A549 (cell line): ENCODE measurements at regions of chr11 and their contacts with region 1.

Region 1: DNA sequence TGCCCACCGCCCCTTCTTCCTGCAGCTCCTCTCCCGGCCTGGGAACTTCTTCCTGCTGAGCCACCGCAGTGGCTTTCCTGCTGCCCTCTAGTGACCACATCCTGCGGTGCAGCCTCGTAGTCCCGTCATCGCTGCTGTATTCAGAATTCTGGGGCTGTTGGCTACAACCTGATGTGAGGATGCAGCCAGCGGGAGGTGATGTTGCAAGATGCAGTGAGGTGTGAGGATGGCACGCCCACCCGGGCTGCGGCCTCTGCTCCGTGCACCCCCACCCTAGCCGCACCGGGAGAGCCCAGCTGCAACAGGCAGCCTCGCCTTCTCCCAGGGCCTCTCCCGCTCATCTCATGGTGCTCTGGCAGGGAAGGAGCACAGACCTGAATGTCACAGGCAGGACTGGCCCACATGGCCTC is 10.1 kb downstream of the CHST1 start:
- DNase-seq: peak; percentile 61 to 88
- ATAC-seq: peak; percentile 83 to 93
- H3K4me3 ChIP-seq: no peak overlapping the region
- H3K27ac ChIP-seq: no peak overlapping the region
- H3K4me1 ChIP-seq: no peaks in the 10 kb centered on the region
- CTCF ChIP-seq: peak; percentile 75
- EP300 ChIP-seq: no peak
- POLR2A ChIP-seq: no peak
- RAD21 ChIP-seq: peak; percentile 64 to 67

Region 2: DNA sequence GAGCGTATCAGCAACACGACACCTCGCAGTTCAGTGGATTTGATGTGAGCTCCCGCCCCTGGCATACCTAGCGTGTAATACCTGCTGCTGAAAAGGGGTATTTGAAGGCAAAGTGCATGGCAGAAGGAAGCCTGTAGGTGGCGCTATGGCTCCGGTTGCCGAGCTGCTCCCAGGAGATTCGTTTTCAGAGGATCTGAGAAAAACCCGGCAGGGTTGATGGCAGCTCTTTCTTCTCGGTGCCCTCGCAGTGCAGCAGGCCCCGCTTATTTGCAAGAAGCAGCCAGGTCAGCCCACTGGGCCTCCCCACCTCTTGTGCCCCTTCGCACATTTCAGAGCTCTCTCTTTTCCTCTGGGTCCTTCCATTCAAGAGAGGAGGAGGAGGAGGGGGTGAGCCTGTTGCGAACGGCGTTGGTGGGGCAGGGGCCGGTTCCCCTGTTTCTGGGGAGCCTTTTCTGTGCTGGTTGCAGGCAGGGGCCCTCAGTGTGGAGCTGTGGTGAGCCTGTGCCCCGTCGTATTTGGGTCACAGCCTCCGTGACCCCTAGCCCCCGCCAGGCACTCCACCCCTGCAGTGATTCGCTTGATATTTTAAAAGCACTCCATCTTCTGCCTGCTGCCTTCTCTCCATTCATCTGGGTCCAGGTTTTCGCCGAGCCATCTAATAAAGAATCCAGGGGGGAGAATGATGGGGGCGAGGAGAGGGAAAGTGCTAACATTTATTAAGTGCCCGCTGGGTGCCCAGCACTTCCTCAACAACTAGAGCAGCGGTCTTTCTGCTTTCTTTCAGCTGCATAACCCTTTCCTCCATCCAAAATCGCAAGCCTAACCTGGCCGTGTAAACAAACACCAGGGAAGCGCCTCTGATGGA is 283.9 kb before region 1 on chr11:
- CTCF ChIA-PET with region 1: interaction called, 149 read pairs
- POLR2A ChIA-PET with region 1: no interaction called
- DNase-seq: peak; percentile 68 to 84
- ATAC-seq: peak; percentile 60 to 92
- H3K4me3 ChIP-seq: no peak overlapping the region
- H3K27ac ChIP-seq: no peak overlapping the region
- H3K4me1 ChIP-seq: no peaks in the 10 kb centered on the region
- CTCF ChIP-seq: peak; percentile 82
- EP300 ChIP-seq: no peak
- POLR2A ChIP-seq: no peak
- RAD21 ChIP-seq: peak; percentile 77 to 91

Region 3: DNA sequence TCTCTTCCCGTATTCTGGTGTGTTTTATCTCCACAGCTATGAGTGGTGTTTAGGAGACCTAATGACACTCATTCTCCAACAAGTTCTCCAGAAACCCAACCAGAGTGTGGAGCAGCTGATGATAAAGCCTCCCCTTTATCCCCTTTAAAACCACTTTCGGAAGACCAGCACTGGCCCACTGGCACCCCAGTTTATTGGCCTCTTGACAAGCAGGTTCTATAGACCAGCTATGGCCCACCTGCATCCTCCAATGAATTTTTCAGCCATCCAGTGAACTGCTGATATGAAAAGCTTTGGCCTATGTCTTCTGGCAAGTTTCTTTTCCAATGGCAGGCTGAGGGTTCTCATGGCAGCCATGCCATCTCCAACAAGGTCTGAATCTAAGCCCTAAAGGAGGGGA is 17.3 kb before region 1 on chr11:
- CTCF ChIA-PET with region 1: interaction called, 75 read pairs
- POLR2A ChIA-PET with region 1: no interaction called
- DNase-seq: no peak
- ATAC-seq: no peak
- H3K4me3 ChIP-seq: no peak overlapping the region
- H3K27ac ChIP-seq: no peak overlapping the region
- H3K4me1 ChIP-seq: no peaks in the 10 kb centered on the region
- CTCF ChIP-seq: no peak
- EP300 ChIP-seq: no peak
- POLR2A ChIP-seq: no peak
- RAD21 ChIP-seq: no peak

Region 4: DNA sequence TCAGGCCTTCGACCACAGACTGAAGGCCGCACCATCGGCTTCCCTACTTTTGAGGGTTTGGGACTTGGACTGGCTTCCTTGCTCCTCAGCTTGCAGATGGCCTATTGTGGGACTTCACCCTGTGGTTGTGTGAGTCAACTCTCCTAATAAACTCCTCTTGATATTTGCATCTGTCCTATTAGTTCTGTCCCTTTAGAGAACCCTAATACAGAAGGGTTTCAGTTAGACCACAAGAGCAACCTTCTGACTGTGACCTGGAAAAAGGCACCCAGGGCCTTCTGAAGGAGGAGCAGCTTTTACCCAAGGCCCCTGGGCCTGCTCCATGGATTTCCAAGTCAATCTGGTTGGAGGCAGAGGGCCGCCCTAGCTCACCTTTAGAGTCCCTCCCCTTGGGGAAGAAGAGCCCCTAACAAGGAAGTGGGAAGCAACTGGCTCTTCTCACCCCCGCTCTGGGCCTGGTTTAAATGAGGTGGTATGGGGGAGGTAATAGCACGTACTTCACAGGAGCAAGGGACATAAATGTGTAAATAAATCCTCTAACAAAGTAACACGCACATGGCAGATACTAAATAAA is 21.3 kb after region 1 on chr11:
- CTCF ChIA-PET with region 1: interaction called, 24 read pairs
- POLR2A ChIA-PET with region 1: no interaction called
- DNase-seq: no peak
- ATAC-seq: no peak
- H3K4me3 ChIP-seq: no peak overlapping the region
- H3K27ac ChIP-seq: no peak overlapping the region
- H3K4me1 ChIP-seq: no peaks in the 10 kb centered on the region
- CTCF ChIP-seq: no peak
- EP300 ChIP-seq: no peak
- POLR2A ChIP-seq: no peak
- RAD21 ChIP-seq: no peak

Region 5: DNA sequence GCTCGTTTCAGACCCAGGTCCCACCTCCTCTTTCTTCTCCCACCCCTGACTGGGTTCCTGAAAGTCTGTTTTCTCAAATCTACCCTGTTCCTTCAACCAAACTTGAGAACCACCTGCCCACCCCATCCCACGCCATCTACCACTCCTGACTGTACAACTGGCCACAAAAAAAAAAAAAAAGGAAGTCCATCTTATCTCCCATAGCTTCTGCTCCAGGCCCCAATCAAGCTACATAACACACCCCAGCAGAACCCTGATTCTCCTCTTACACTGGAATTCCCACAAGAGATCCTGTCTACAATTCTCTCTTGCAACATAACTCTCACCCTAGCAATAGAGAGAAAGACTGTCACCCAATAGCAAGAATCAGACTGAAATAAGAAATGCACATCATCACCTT is 49.3 kb after region 1 on chr11:
- CTCF ChIA-PET with region 1: interaction called, 13 read pairs
- POLR2A ChIA-PET with region 1: no interaction called
- DNase-seq: no peak
- ATAC-seq: no peak
- H3K4me3 ChIP-seq: no peak overlapping the region
- H3K27ac ChIP-seq: no peak overlapping the region
- H3K4me1 ChIP-seq: no peaks in the 10 kb centered on the region
- CTCF ChIP-seq: no peak
- EP300 ChIP-seq: no peak
- POLR2A ChIP-seq: no peak
- RAD21 ChIP-seq: no peak

Region 6: DNA sequence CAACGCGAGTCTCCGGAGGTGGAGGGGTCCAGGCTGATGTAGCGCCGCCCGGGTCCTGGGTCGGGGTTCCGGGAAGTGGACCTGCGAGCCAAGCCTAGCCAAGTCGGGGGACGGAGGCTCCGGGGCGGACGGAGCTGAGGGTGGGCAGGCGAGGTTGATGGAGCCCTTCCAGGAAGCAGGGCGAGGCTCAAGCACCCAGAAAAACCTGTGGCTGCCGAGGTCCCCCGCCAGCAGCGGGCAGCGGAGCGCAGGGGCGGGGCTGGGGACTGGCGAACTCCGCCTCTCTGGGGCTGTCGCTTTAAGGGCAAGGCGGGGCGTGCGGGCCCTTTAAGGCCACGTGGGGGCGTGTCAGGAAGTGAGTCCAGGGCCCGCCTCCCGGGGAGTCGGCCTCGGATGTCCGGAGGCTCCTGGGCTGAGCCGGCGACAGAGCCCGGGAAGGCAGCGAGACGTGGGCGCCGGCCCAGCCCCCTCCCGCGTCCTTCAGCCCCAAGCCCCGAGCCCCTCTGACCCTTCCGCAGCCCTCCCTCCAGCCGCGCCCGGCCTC is 149.5 kb after region 1 on chr11 and contains the start of gene SLC35C1:
- CTCF ChIA-PET with region 1: no interaction called
- POLR2A ChIA-PET with region 1: no interaction called
- DNase-seq: peak; percentile 87 to 94
- ATAC-seq: peak; percentile 90 to 95
- H3K4me3 ChIP-seq: peak within 1 kb of the TSS; percentile 68
- H3K27ac ChIP-seq: peak within 1 kb of the TSS; percentile 89 to 92
- H3K4me1 ChIP-seq: peaks cover 23% of the 10 kb centered on the region
- CTCF ChIP-seq: no peak
- EP300 ChIP-seq: no peak
- POLR2A ChIP-seq: peak; percentile 68
- RAD21 ChIP-seq: no peak
- polyA plus RNA-seq, gene SLC35C1: 3.3 and 7.8 TPM in 2 replicates

Region 7: DNA sequence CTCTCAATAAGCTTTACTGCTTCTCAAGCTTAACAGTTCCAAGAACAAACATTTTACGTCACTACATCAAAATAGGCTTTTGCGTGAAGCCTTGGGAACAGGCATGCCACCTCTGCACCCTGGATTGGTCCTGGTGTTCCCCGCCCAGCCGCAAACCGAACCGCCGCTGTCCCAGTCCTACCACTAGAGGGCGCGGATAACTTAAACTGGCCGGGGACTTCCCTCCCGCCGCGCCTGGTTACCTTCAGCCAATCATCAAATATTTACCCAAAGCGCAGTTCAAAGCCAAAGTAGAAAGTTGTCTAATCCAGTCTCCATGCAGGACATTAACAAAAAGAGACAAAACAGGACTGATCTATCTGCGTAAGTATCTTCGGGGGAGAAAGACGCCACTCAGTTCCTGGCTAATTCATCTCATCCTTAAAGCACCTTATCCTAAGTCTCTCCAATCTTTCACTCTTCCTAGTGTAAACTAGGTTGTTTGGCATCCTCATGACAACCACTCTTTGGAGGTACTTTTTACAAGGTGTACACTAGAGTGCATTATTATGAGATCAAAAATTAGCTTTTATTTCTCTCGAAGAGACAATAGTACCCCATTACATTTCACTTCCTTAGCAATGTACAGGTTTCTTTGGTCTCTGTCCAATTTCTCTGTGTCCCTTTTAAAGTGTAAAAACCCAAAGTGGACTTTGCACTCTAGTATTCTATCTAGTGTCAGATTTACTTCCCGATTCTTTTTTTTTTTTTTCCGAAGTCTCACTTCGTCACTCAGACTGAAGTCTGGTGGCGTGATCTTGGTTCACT is 188.0 kb after region 1 on chr11:
- CTCF ChIA-PET with region 1: no interaction called
- POLR2A ChIA-PET with region 1: no interaction called
- DNase-seq: peak; percentile 88 to 91
- ATAC-seq: peak; percentile 61 to 73
- H3K4me3 ChIP-seq: peak overlapping the region; percentile 32; the same call in 2 of the 3 replicates
- H3K27ac ChIP-seq: no peak overlapping the region; a peak in 1 of 6 replicates
- H3K4me1 ChIP-seq: peaks cover 15% of the 10 kb centered on the region
- CTCF ChIP-seq: peak; percentile 87
- EP300 ChIP-seq: no peak
- POLR2A ChIP-seq: no peak
- RAD21 ChIP-seq: peak; percentile 52 to 59; a peak in 4 of 5 replicates